AG04450 (cell line): ENCODE measurements at regions of chr9 and their contacts with region 1.

Region 1: DNA sequence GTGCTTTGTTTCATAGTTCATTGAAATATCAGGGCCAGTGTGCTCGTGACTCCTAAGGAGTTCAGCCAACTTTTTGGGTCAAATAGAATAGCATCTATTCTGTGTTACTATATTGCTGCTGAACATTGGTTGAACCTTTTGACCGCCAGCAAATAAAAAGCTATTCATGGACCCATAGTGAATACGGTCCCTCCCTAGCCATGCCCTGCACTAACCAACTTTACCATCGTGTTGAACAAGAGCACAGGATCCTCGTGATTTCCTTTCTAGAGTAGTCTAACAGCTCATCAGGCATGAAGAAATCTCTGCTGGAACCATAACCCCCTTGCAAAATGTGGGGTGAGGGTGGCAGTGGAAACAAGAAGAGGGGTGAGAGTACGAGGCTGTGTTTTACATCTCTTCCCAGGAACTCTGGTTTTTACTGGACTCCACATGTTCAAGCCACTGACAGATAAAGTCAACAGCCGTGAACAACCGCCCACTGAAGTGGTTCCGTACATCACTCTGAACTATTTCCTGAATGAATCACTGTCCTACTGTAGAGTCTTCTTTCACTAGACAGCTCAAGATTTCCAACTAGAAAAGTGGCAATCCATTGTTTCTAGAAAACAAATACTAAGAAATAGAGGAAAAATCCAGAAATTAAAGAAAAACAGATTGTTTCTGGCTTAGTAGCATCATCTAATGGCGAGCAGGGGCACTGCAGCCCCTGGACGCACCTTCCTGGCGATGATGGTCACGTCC is 70.1 kb upstream of the SPATA31E1 start:
- DNase-seq: peak; percentile 13
- H3K4me3 ChIP-seq: no peak overlapping the region
- H3K27ac ChIP-seq: no peak overlapping the region
- H3K27me3 ChIP-seq: no peaks in the 10 kb centered on the region
- CTCF ChIP-seq: peak; percentile 98

Region 2: GRCh38 chr9:87678650-87679515 is 133.7 kb before region 1 on chr9:
- CTCF ChIA-PET with region 1: interaction called, 188 read pairs
- POLR2A ChIA-PET with region 1: no interaction called
- DNase-seq: peak; percentile 50
- H3K4me3 ChIP-seq: no peak overlapping the region
- H3K27ac ChIP-seq: no peak overlapping the region
- H3K27me3 ChIP-seq: peaks cover 5% of the 10 kb centered on the region
- CTCF ChIP-seq: peak; percentile 90

Region 3: GRCh38 chr9:87684627-87685219 is 127.8 kb before region 1 on chr9:
- CTCF ChIA-PET with region 1: interaction called, 188 read pairs
- POLR2A ChIA-PET with region 1: no interaction called
- DNase-seq: no peak
- H3K4me3 ChIP-seq: no peak overlapping the region
- H3K27ac ChIP-seq: no peak overlapping the region
- H3K27me3 ChIP-seq: no peaks in the 10 kb centered on the region
- CTCF ChIP-seq: peak; percentile 80

Region 4: GRCh38 chr9:87792831-87793288 is 19.7 kb before region 1 on chr9:
- CTCF ChIA-PET with region 1: interaction called, 12 read pairs
- POLR2A ChIA-PET with region 1: no interaction called
- DNase-seq: peak; percentile 18
- H3K4me3 ChIP-seq: no peak overlapping the region
- H3K27ac ChIP-seq: peak overlapping the region; percentile 75
- H3K27me3 ChIP-seq: no peaks in the 10 kb centered on the region
- CTCF ChIP-seq: peak; percentile 33

Region 5: DNA sequence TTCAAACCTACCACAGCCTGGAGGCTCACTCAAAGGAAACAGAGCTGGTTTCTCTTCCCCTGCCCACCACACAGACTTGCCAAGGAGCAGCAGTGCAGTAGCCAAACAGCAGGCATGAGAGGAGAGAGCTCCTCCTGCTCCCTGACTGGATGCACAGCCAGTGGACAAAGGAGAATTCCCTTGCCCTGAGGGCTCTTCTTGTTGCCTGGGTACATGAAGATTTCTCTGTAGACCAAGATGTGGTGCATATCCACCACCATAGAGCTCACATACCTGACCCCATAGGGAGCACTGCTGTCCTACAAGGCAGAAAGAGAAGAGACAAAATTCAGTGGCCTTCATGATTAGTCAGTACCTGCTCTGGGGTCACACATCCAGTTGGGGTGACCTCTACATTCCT is 13.8 kb after region 1 on chr9:
- CTCF ChIA-PET with region 1: interaction called, 16 read pairs
- POLR2A ChIA-PET with region 1: no interaction called
- DNase-seq: no peak
- H3K4me3 ChIP-seq: no peak overlapping the region
- H3K27ac ChIP-seq: no peak overlapping the region
- H3K27me3 ChIP-seq: peaks cover 8% of the 10 kb centered on the region
- CTCF ChIP-seq: no peak

Region 6: GRCh38 chr9:88287972-88288371 is 475.4 kb after region 1 on chr9:
- CTCF ChIA-PET with region 1: interaction called, 13 read pairs
- POLR2A ChIA-PET with region 1: no interaction called
- DNase-seq: no peak
- H3K4me3 ChIP-seq: no peak overlapping the region
- H3K27ac ChIP-seq: no peak overlapping the region
- H3K27me3 ChIP-seq: no peaks in the 10 kb centered on the region
- CTCF ChIP-seq: no peak